SK-N-SH (cell line): ENCODE measurements at regions of chr2 and their contacts with region 1.

Region 1: DNA sequence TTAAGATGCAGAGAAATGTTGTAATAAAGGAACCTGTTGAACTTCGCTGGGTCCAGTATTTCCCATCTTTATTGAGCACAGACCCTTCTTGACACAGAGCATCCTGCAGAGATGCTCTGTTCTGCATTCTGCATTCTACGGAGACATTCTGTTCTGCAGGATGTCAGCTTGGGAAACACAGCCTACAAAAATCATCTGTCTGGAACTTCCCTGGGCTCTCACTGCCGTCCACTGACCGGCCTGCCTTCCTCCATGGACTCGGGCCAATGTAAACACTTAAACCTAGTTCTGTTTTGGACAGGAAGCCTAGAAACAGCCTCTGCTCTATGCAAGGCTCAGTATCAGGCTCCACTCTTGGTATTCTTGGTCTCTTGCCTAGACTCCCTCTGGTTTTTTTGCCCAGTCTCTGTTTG is 90.0 kb upstream of the PPP1CB start:
- DNase-seq: peak; percentile 63
- H3K4me3 ChIP-seq: no peak overlapping the region
- H3K27ac ChIP-seq: peak overlapping the region; percentile 68 to 98
- H3K4me1 ChIP-seq: peaks cover 43 to 50% of the 10 kb centered on the region in 2 experiments
- H3K27me3 ChIP-seq: no peaks in the 10 kb centered on the region
- CTCF ChIP-seq: no peak
- EP300 ChIP-seq: peak in 1 of 2 experiments; percentile 61; a peak in 2 of 4 replicates
- RAD21 ChIP-seq: peak; percentile 41

Region 2: GRCh38 chr2:28552045-28552823 is 109.4 kb before region 1 on chr2:
- CTCF ChIA-PET with region 1: no interaction called
- POLR2A ChIA-PET with region 1: no interaction called
- DNase-seq: no peak
- H3K4me3 ChIP-seq: no peak overlapping the region
- H3K27ac ChIP-seq: no peak overlapping the region
- H3K4me1 ChIP-seq: peaks cover 0 to under 1% of the 10 kb centered on the region in 2 experiments; a peak in 1 of 4 replicates
- H3K27me3 ChIP-seq: no peaks in the 10 kb centered on the region
- CTCF ChIP-seq: no peak
- EP300 ChIP-seq: no peak
- RAD21 ChIP-seq: no peak

Region 3: DNA sequence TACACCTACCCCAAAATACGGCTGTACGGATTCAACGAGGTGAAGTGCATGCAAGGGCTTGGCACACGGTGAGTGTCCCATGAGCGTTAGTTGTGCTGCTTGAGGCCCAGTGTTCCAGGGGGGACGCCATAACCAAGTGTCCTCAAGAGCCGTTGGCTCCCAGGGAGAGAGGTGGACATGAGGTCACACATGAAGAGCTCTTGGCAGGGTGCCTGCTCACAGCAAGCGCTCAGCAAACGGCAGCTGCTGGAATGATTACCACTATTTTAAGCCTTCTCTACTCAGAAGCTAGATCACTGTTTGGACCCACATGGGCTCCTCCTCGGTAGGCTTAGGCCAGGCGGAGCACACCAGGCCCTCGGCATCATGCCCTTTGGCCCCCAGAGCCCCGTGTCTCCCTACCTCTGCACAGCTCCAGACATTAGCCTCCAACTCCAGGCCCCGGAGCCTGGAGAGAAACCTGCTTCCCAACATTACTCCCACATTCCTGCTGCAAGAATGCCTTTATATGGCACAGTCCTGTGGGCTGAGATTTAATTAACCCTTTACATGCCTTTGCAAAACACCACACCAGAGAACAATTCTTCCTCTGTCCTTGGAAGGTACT is 21.6 kb after region 1 on chr2:
- CTCF ChIA-PET with region 1: interaction called, 3 read pairs
- POLR2A ChIA-PET with region 1: interaction called, 11 read pairs
- DNase-seq: no peak
- H3K4me3 ChIP-seq: no peak overlapping the region
- H3K27ac ChIP-seq: no peak overlapping the region
- H3K4me1 ChIP-seq: peaks cover 3 to 17% of the 10 kb centered on the region in 2 experiments; a peak in 2 of 4 replicates
- H3K27me3 ChIP-seq: no peaks in the 10 kb centered on the region
- CTCF ChIP-seq: no peak
- EP300 ChIP-seq: no peak
- RAD21 ChIP-seq: no peak

Region 4: GRCh38 chr2:28721601-28722191 is 60.1 kb after region 1 on chr2:
- CTCF ChIA-PET with region 1: no interaction called
- POLR2A ChIA-PET with region 1: no interaction called
- DNase-seq: no peak
- H3K4me3 ChIP-seq: no peak overlapping the region
- H3K27ac ChIP-seq: no peak overlapping the region
- H3K4me1 ChIP-seq: peaks cover 2 to 9% of the 10 kb centered on the region in 2 experiments; a peak in 3 of 4 replicates
- H3K27me3 ChIP-seq: no peaks in the 10 kb centered on the region
- CTCF ChIP-seq: no peak
- EP300 ChIP-seq: no peak
- RAD21 ChIP-seq: no peak

Region 5: DNA sequence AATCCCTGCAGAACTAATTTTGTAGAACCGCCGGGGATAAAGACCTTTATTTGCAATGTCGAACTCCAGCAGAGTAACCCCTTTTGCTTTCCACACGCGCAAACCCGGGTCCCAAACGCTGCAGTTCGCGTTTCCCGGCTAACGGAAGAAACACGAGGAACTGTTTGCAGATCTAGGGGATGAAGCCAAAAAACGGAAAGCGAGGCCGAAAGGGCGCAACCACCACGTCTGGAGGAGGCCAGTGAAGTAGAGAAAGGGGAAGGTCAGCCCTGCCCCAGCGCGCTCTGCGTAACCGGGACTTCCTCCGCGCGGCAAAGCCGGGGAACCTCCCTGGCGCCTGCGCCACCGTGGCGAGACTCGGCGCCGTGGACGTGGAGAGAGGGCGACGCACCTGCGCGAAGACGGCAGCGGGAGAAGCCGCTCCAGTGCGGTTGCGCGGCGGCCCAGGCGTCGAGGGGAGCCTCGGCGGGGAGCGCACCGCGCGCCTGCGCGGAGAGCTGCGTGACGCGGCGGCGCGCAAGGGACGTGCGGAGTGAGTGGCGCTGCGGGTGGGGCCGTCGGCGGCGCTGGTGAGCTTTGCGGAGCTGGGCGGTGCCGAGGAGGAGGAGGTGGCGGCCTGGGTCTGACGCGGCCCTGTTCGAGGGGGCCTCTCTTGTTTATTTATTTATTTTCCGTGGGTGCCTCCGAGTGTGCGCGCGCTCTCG is 89.8 kb after region 1 on chr2 and contains the start of gene PPP1CB:
- CTCF ChIA-PET with region 1: interaction called, 49 read pairs
- POLR2A ChIA-PET with region 1: interaction called, 105 read pairs
- DNase-seq: peak; percentile 99
- H3K4me3 ChIP-seq: peak within 1 kb of the TSS; percentile 75 to 98
- H3K27ac ChIP-seq: peak within 1 kb of the TSS; percentile 91 to 100
- H3K4me1 ChIP-seq: peaks cover 15 to 22% of the 10 kb centered on the region in 2 experiments; a peak in 3 of 4 replicates
- H3K27me3 ChIP-seq: no peaks in the 10 kb centered on the region
- CTCF ChIP-seq: 0 out of 2 replicates have a peak, but pooled peaks have one; percentile 22
- EP300 ChIP-seq: no peak; a peak in 1 of 4 replicates
- RAD21 ChIP-seq: peak; percentile 31
- polyA plus RNA-seq, gene PPP1CB: 21.7 and 24.7 TPM in 2 replicates